Right cardiac atrium (tissue), 5 donors: ENCODE measurements at regions of chr5 and their contacts with region 1.

Region 1: GRCh38 chr5:159456722-159457465 is 126.6 kb upstream of the IL12B start:
- DNase-seq: no peak
- ATAC-seq: no peak
- H3K4me3 ChIP-seq: no peak overlapping the region
- H3K27ac ChIP-seq: no peak overlapping the region
- H3K4me1 ChIP-seq: no peaks in the 10 kb centered on the region
- H3K27me3 ChIP-seq: no peaks in the 10 kb centered on the region

Region 2: GRCh38 chr5:159504857-159505304 is 48.0 kb after region 1 on chr5:
- intact Hi-C with region 1: loop called in 1 of 4 experiments (anchors 10 kb)
- DNase-seq: peak; percentile 37 to 68 (median 59)
- ATAC-seq: peak; percentile 86 to 93
- H3K4me3 ChIP-seq: no peak overlapping the region
- H3K27ac ChIP-seq: peak overlapping the region; percentile 86
- H3K4me1 ChIP-seq: peaks cover 6% of the 10 kb centered on the region
- H3K27me3 ChIP-seq: no peaks in the 10 kb centered on the region

Region 3: DNA sequence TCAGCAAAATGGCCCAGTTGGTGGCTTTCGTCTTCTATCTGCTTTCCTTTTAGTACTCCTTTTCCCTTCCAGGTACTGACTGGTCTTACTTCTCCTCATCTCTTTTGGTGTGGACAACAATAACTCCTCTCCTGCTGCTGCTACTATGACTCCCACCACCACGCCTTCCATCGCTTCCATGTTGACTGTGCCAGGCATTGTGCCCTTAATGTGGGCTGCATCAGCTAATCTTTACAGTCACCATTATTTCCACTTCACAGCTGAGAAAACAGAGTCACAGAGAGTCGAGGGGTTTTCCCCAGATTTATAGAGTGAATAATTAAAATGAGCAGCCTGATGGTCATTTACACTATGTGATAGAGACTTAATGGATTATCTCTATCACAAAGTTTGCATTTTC is 58.3 kb after region 1 on chr5:
- intact Hi-C with region 1: no loop called
- DNase-seq: no peak
- ATAC-seq: no peak
- H3K4me3 ChIP-seq: no peak overlapping the region
- H3K27ac ChIP-seq: no peak overlapping the region
- H3K4me1 ChIP-seq: peaks cover 5% of the 10 kb centered on the region
- H3K27me3 ChIP-seq: no peaks in the 10 kb centered on the region

Region 4: DNA sequence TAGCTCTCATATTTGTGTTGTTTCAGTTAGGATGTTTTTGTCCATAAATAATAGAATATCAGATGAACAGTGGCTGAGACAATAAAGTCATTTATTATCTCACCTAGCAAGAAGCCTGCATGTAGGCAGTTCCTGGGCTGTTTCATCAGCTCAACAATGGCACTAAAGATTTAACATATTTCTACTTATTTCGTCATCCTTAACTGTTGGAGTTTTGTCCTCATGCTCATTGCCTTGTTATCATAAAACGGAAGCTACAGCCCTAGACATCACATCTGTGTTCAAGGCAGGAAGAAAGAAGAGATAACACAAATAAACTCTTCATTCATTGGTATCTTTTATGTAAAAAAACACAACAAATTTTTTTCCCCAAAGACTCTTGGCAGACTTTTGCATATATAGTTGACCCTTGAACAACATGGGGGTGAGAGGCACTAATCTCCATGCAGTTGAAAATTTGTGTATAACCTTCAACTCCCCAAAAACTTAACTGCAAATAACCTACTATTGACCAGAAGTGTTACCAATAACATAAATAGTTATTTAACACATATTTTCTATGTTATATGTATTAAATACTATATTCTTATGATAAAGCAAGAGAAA is 182.2 kb after region 1 on chr5:
- intact Hi-C with region 1: no loop called
- DNase-seq: no peak
- ATAC-seq: no peak
- H3K4me3 ChIP-seq: no peak overlapping the region
- H3K27ac ChIP-seq: no peak overlapping the region
- H3K4me1 ChIP-seq: no peaks in the 10 kb centered on the region
- H3K27me3 ChIP-seq: no peaks in the 10 kb centered on the region